T-cell (primary cell): ENCODE measurements at regions of chr3 and their contacts with region 1.

Region 1: GRCh38 chr3:49397470-49397869 is 14.3 kb downstream of the RHOA start:
- DNase-seq: peak in 1 of 35 experiments; percentile 36
- ATAC-seq: peak in 2 of 4 experiments; percentile 38 to 53
- H3K4me3 ChIP-seq: no peak overlapping the region
- H3K4me3 Mint-ChIP-seq: no peak overlapping the region
- H3K27ac ChIP-seq: no peak overlapping the region
- H3K27ac Mint-ChIP-seq: peak overlapping the region; percentile 4 to 7
- H3K4me1 ChIP-seq: peaks cover 3 to 65% of the 10 kb centered on the region in 2 experiments
- H3K4me1 Mint-ChIP-seq: peaks cover 76 to 79% (median 79%) of the 10 kb centered on the region in 3 donors
- H3K27me3 ChIP-seq: no peaks in the 10 kb centered on the region
- H3K27me3 Mint-ChIP-seq: no peaks in the 10 kb centered on the region

Region 2: GRCh38 chr3:48926425-48927392 is 470.8 kb before region 1 on chr3:
- CTCF ChIA-PET with region 1: no interaction called
- POLR2A ChIA-PET with region 1: no interaction called
- DNase-seq: no peak
- ATAC-seq: peak in 1 of 4 experiments; percentile 20
- H3K4me3 ChIP-seq: no peak overlapping the region
- H3K4me3 Mint-ChIP-seq: peak overlapping the region in 1 of 3 donors; percentile 20
- H3K27ac ChIP-seq: peak overlapping the region; percentile 0
- H3K27ac Mint-ChIP-seq: peak overlapping the region; percentile 44 to 49
- H3K4me1 ChIP-seq: peaks cover 21 to 29% of the 10 kb centered on the region in 2 experiments
- H3K4me1 Mint-ChIP-seq: peaks cover 60 to 61% (median 60%) of the 10 kb centered on the region in 3 donors
- H3K27me3 ChIP-seq: no peaks in the 10 kb centered on the region
- H3K27me3 Mint-ChIP-seq: no peaks in the 10 kb centered on the region

Region 3: DNA sequence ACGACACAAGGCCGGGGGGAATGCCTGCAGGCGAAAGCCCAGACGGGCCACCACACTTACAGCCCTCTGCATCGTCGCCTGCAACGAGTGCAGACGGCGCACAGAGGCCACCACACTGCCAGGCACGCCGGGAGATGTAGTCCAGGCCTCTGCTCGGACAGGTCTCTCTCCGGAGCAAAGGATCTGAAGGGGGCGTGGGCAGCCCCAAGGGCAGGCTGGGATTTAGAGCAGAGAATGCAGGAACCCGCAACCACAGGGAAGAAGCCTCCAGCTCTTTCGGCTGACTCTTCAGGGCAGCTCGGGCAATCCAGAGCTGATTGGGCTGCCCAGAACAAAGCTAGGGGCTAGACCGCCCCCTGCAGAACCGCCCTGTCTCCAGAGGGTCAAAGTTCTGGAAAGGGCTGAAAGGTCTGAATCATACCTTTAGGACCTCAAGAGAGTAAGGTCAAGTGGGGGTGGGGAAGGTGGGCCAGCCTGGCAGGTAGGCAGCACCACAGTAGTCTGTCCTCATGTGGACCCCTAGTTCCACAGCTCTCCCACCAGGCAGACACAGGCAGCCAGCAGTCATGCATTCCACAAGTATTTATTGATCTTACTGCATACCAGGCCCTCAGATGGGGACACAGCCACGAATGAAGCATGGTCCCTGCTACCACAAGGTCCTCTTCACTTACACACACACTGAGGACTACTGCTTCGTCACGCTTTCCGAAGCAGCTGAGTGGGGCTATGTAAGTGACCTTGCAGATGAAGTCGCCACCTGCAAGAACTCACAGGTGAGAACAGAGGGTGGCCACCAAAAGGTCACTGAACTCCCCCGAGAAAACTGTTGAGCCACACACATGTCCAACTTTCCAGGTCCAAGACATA is 25.1 kb after region 1 on chr3 and contains the start of gene AMT:
- CTCF ChIA-PET with region 1: no interaction called
- POLR2A ChIA-PET with region 1: interaction called in 1 of 2 experiments, 10 read pairs
- DNase-seq: no peak
- ATAC-seq: no peak
- H3K4me3 ChIP-seq: peak within 1 kb of the TSS in 1 of 2 donors; percentile 17
- H3K4me3 Mint-ChIP-seq: peak within 1 kb of the TSS in 2 of 3 donors; percentile 28 to 41
- H3K27ac ChIP-seq: no peak within 1 kb of the TSS
- H3K27ac Mint-ChIP-seq: peak within 1 kb of the TSS in 1 of 2 donors; percentile 44
- H3K4me1 ChIP-seq: peaks cover 5 to 46% of the 10 kb centered on the region in 2 experiments
- H3K4me1 Mint-ChIP-seq: peaks cover 28 to 54% (median 33%) of the 10 kb centered on the region in 3 donors
- H3K27me3 ChIP-seq: no peaks in the 10 kb centered on the region
- H3K27me3 Mint-ChIP-seq: no peaks in the 10 kb centered on the region
- total RNA-seq, gene AMT: 9.6 to 14.1 (median 11.1) TPM

Region 4: GRCh38 chr3:49733551-49733950 is 336.1 kb after region 1 on chr3:
- CTCF ChIA-PET with region 1: no interaction called
- POLR2A ChIA-PET with region 1: no interaction called
- DNase-seq: no peak
- ATAC-seq: no peak
- H3K4me3 ChIP-seq: no peak overlapping the region
- H3K4me3 Mint-ChIP-seq: no peak overlapping the region
- H3K27ac ChIP-seq: no peak overlapping the region
- H3K27ac Mint-ChIP-seq: no peak overlapping the region
- H3K4me1 ChIP-seq: no peaks in the 10 kb centered on the region
- H3K4me1 Mint-ChIP-seq: peaks cover 0 to 4% (median under 1%) of the 10 kb centered on the region in 3 donors
- H3K27me3 ChIP-seq: no peaks in the 10 kb centered on the region
- H3K27me3 Mint-ChIP-seq: no peaks in the 10 kb centered on the region